Thyroid gland (tissue), 4 donors: ENCODE measurements at regions of chr17 and their contacts with region 1.

Region 1: DNA sequence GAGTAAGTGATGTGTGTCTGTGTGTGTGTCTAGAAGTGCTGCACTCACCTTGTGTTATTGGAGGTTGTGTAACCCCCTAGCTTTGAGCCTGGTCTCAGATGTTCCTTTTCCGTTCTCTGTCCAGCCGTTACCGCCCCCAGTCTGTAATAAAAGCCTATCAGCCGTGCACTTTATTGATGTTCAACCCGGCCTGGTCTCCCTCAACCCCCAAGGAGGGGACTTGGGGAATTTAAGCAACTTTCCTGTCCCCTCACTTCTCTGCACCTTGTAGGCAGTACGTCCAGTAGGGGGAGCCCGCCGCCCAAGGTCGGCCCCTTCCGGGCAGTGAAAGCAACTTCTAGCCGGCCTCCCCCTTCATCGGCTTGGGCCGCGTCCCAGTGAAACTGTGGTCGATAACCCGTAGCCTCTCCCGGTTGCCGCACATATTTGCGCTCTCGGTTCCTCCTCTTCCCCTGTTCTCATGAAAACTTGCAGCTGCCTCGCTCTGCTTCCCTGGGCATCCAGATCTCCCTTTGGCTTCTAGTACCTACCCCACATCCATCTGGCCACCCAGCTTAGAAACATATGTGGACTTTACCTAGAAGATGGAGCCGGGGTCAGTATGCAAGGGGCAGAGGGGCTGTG is 7.9 kb downstream of the PNPO start:
- DNase-seq: peak; percentile 98 to 99
- H3K4me3 ChIP-seq: no peak overlapping the region
- H3K27ac ChIP-seq: peak overlapping the region; percentile 92 to 97 (median 96)
- H3K4me1 ChIP-seq: peaks cover 70 to 80% of the 10 kb centered on the region in 2 donors
- H3K27me3 ChIP-seq: no peaks in the 10 kb centered on the region
- CTCF ChIP-seq: peak; percentile 69 to 98 (median 90)
- POLR2A ChIP-seq: peak in 1 of 2 donors; percentile 72

Region 2: GRCh38 chr17:47970704-47971463 is 21.6 kb after region 1 on chr17 and contains the start of gene CDK5RAP3:
- intact Hi-C with region 1: loop called (anchors 2 kb)
- DNase-seq: peak; percentile 100
- H3K4me3 ChIP-seq: peak within 1 kb of the TSS; percentile 27 to 95 (median 88)
- H3K27ac ChIP-seq: peak within 1 kb of the TSS in 2 of 3 donors; percentile 77 to 85
- H3K4me1 ChIP-seq: peaks cover 11 to 24% of the 10 kb centered on the region in 2 donors
- H3K27me3 ChIP-seq: no peaks in the 10 kb centered on the region
- CTCF ChIP-seq: peak; percentile 79 to 100 (median 96)
- POLR2A ChIP-seq: peak in 1 of 2 donors; percentile 85
- total RNA-seq, gene CDK5RAP3: 165 to 221 (median 193) TPM